HepG2 (cell line): ENCODE measurements at regions of chr11 and their contacts with region 1.

Region 1: GRCh38 chr11:65711785-65712632 is at the start of gene KAT5:
- DNase-seq: peak; percentile 95
- ATAC-seq: peak; percentile 85
- H3K4me3 ChIP-seq: peak within 1 kb of the TSS; percentile 61 to 80 (median 66)
- H3K27ac ChIP-seq: peak within 1 kb of the TSS; percentile 96
- H3K4me1 ChIP-seq: peaks cover 27% of the 10 kb centered on the region
- H3K27me3 ChIP-seq: no peaks in the 10 kb centered on the region; a peak in 1 of 5 replicates
- CTCF ChIP-seq: peak; percentile 99
- EP300 ChIP-seq: peak in 1 of 2 experiments; percentile 61; a peak in 3 of 4 replicates
- POLR2A ChIP-seq: peak in 1 of 2 experiments; percentile 55; a peak in 2 of 4 replicates
- RAD21 ChIP-seq: peak; percentile 94
- total RNA-seq, gene KAT5: 45.4 and 48.3 TPM in 2 replicates

Region 2: DNA sequence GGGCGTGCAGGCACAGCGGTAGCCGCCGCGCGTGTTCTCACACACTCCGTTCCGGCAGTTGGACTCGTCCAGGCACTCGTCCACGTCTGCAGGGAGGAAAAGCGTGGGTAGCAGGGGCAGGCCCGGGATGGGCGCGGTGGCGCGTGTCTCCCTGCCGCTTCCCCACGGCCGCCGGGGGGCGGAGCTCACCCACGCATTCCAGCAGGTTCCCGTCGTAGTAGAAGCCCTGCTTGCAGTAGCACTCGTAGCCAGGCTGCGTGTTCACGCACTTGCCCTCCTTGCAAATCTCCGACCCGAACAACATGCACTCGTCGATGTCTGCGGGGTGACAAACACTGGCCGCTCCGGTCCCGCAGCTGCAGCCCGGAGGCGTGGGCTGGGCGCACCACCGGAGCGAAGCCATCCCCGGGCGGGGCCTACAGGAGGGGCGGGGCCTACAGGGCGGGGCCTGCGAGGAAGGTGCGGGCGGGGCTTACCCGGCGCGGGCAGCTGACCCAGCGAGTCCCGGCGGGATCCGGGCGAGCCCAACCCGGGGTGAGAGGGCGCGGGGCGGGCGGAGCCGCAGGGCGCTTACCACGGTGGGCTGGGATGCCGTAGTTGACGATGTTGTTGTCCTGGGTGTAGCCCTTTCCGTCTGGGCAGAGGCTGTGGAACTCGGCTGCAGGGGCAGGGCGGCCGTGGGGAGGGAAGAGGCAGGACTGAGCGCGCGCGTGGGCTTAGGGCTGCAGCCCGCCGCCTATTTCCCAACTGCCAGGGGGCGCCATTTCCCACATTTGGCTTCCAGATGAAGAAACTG is 171.5 kb before region 1 on chr11:
- CTCF ChIA-PET with region 1: no interaction called
- POLR2A ChIA-PET with region 1: no interaction called
- in situ Hi-C with region 1: no loop called
- intact Hi-C with region 1: no loop called
- DNase-seq: no peak
- ATAC-seq: peak; percentile 56
- H3K4me3 ChIP-seq: no peak overlapping the region
- H3K27ac ChIP-seq: no peak overlapping the region
- H3K4me1 ChIP-seq: peaks cover 6% of the 10 kb centered on the region
- H3K27me3 ChIP-seq: no peaks in the 10 kb centered on the region
- CTCF ChIP-seq: peak; percentile 90
- EP300 ChIP-seq: no peak
- POLR2A ChIP-seq: no peak
- RAD21 ChIP-seq: peak; percentile 93

Region 3: DNA sequence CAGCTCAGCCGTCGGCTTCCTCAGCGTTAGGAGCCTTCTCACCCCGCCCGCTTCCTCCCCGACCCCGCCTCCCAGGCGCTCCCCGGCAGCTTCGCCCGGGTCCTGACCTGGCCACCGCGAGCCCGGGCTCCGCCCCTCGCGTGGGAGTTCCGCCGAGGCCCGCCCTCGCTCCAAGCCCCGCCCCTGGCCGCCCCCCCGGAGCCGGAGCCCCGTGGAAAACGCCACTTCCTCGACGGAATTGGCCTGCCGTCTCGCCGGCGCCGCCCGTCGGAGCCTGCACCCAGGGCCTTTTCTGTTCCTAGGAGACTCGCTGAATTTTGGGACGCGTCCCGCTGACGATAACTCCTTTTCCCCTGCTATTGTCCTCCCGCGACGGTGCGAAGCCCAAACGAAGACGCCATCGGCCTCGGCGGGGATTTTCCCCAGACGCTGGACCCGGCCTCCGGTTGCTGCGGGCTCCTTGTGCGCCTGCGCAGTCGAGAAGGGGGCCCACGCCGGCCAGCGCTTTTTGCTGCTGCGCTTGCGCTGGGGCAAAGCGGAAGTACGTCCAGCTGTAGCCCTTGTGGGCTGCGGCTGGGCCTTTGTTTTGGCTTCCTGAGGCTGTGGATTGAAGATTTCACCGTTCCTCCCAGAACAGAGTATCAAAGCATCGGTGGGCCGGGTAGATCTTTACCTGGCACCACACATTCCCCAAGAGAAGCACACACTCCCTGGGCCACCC is 59.3 kb before region 1 on chr11:
- CTCF ChIA-PET with region 1: no interaction called
- POLR2A ChIA-PET with region 1: interaction called, 14 read pairs
- in situ Hi-C with region 1: no loop called
- intact Hi-C with region 1: no loop called
- DNase-seq: peak; percentile 86
- ATAC-seq: peak; percentile 77
- H3K4me3 ChIP-seq: peak overlapping the region; percentile 48 to 76 (median 54); a peak in 5 of 6 replicates
- H3K27ac ChIP-seq: peak overlapping the region; percentile 98
- H3K4me1 ChIP-seq: peaks cover 35% of the 10 kb centered on the region
- H3K27me3 ChIP-seq: no peaks in the 10 kb centered on the region
- CTCF ChIP-seq: no peak
- EP300 ChIP-seq: no peak
- POLR2A ChIP-seq: peak; percentile 48 to 53; a peak in 3 of 4 replicates
- RAD21 ChIP-seq: peak; percentile 8; the same call in 1 of the 2 replicates

Region 4: GRCh38 chr11:65773784-65774411 is 61.9 kb after region 1 on chr11:
- CTCF ChIA-PET with region 1: no interaction called
- POLR2A ChIA-PET with region 1: interaction called, 6 read pairs
- in situ Hi-C with region 1: no loop called
- intact Hi-C with region 1: loop called (anchors 1 kb)
- DNase-seq: no peak
- ATAC-seq: no peak
- H3K4me3 ChIP-seq: no peak overlapping the region
- H3K27ac ChIP-seq: no peak overlapping the region
- H3K4me1 ChIP-seq: peaks cover 38% of the 10 kb centered on the region
- H3K27me3 ChIP-seq: no peaks in the 10 kb centered on the region
- CTCF ChIP-seq: peak; percentile 45
- EP300 ChIP-seq: no peak
- POLR2A ChIP-seq: no peak
- RAD21 ChIP-seq: no peak

Region 5: DNA sequence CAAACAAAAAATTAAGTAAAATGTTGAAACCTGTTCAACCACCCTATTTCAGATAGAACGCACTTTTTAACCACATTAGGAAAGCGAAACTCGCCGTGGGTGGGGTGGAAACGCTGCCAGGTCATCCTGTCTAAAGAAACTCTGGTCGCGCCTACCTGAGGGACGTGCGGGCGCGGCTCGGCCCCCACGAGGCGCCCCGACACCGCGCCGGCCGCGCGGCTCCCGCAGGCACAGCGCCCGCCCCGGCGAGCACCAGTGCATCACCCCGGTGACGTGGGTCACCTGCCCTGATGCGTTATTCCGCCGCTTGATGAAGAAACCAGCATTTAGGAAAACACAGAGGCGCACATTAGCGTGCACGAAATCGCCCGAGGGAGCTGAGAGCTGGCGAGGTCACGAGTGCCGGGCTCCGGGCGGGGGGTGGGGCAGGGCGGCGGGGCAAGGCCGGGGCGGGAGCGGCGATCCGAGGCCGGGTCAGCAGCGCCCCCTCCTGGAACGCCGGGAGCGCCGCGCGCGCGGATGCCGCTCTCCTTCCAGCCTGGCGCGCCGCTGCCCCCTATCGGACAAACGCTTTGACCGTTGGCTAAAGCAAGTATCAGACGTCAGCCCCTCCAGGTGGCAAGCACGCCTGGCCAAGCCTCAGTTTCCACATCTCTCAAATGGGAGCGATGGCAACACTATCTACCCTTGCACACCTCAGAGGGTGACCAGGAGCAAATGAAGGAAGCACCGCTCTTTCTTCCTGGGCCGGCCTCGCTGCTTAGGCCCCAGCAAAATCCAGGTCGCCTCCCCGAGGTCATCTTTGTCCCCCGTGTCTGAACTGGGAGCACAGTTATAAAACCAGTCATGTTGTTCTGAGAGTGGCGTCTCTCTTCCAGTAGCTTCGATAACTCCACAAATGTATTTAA is 106.1 kb after region 1 on chr11:
- CTCF ChIA-PET with region 1: interaction called, 40 read pairs
- POLR2A ChIA-PET with region 1: interaction called, 18 read pairs
- in situ Hi-C with region 1: loop called (anchors 10 kb)
- intact Hi-C with region 1: loop called (anchors 1 kb)
- DNase-seq: peak; percentile 71
- ATAC-seq: peak; percentile 80
- H3K4me3 ChIP-seq: peak overlapping the region; percentile 51 to 76 (median 63)
- H3K27ac ChIP-seq: no peak overlapping the region
- H3K4me1 ChIP-seq: peaks cover 30% of the 10 kb centered on the region
- H3K27me3 ChIP-seq: 0 out of 5 replicates have a peak, but pooled peaks cover 0 to 4% of the 10 kb centered on the region in 2 experiments
- CTCF ChIP-seq: peak; percentile 95
- EP300 ChIP-seq: no peak
- POLR2A ChIP-seq: 0 out of 4 replicates have a peak, but pooled peaks of 1 of the 2 experiments have one; percentile 30
- RAD21 ChIP-seq: peak; percentile 98

Region 6: DNA sequence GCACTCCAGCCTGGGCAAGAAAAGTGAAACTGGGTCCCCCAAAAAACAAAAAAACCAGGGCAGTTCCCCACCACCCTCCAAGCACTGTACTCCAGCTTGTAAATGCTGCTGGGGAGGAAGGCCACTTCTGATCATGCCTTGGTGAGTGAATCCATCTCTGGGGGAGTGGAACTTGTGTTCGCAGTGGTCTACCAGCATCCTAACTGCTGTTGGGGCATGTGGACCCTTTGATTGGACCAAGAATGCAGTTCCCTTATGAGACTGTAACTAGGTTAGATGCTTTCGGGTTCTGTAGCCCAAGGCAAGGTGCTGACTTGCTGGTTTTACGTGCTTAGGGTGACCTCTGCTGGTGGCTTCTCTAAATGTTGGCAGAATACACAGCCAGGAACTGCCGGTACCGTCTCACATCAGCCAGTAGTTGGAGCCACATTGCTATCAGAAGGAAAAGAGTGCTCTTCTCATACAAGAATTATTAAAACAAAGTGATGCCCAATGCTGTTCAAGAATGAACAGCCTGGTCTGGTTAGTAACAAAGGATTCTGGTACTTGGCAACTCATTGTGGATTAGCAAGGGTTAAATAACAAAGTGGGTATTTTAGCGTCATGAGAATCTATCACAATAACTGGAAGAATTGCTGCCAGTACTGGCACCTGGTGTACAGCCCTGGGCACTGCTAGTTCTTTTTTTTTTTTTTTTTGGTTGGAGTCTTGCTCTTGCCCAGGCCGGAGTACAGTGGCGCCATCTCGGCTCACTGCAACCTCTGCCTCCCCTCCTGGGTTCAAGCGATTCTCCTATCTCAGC is 277.0 kb after region 1 on chr11:
- CTCF ChIA-PET with region 1: interaction called, 12 read pairs
- POLR2A ChIA-PET with region 1: interaction called, 3 read pairs
- in situ Hi-C with region 1: loop called (anchors 10 kb)
- intact Hi-C with region 1: loop called (anchors 1 kb)
- DNase-seq: peak; percentile 92
- ATAC-seq: peak; percentile 98
- H3K4me3 ChIP-seq: no peak overlapping the region
- H3K27ac ChIP-seq: no peak overlapping the region
- H3K4me1 ChIP-seq: peaks cover 4% of the 10 kb centered on the region
- H3K27me3 ChIP-seq: no peaks in the 10 kb centered on the region
- CTCF ChIP-seq: peak; percentile 97
- EP300 ChIP-seq: no peak
- POLR2A ChIP-seq: no peak
- RAD21 ChIP-seq: peak; percentile 93